Activated T-helper 1 cell treated with anti-CD3 and anti-CD28 coated beads, Interleukin-12 subunit alpha, Interleukin-12 subunit beta, Interleukin-2, Interleukin-4 antibody, amounts not matched to agents 30 ng/mL and 10 ng/mL and 1 ng/mL, durations not matched to agents 14 hours and 24 hours and 36 hours (primary cell): ENCODE measurements at regions of chr22 and their contacts with region 1.

Region 1: GRCh38 chr22:38755911-38756532 is at the start of gene SUN2:
- DNase-seq: peak; percentile 94
- H3K4me3 Mint-ChIP-seq: peak within 1 kb of the TSS; percentile 95
- H3K27ac Mint-ChIP-seq: peak within 1 kb of the TSS; percentile 97
- H3K4me1 Mint-ChIP-seq: peaks cover 59% of the 10 kb centered on the region
- H3K27me3 Mint-ChIP-seq: no peaks in the 10 kb centered on the region
- total RNA-seq, gene SUN2: 146 and 154 TPM in 2 replicates

Region 2: GRCh38 chr22:38740754-38741153 is 15.3 kb before region 1 on chr22:
- intact Hi-C with region 1: no loop called
- DNase-seq: no peak
- H3K4me3 Mint-ChIP-seq: no peak overlapping the region
- H3K27ac Mint-ChIP-seq: no peak overlapping the region
- H3K4me1 Mint-ChIP-seq: peaks cover 27% of the 10 kb centered on the region
- H3K27me3 Mint-ChIP-seq: no peaks in the 10 kb centered on the region

Region 3: GRCh38 chr22:38793721-38794466 is 37.9 kb after region 1 on chr22 and contains the start of gene DNAL4:
- intact Hi-C with region 1: loop called (anchors 1 kb)
- DNase-seq: peak; percentile 90
- H3K4me3 Mint-ChIP-seq: peak within 1 kb of the TSS; percentile 93
- H3K27ac Mint-ChIP-seq: peak within 1 kb of the TSS; percentile 80
- H3K4me1 Mint-ChIP-seq: peaks cover 22% of the 10 kb centered on the region
- H3K27me3 Mint-ChIP-seq: peaks cover 4% of the 10 kb centered on the region
- total RNA-seq, gene DNAL4: 5.0 TPM in 2 replicates

Region 4: DNA sequence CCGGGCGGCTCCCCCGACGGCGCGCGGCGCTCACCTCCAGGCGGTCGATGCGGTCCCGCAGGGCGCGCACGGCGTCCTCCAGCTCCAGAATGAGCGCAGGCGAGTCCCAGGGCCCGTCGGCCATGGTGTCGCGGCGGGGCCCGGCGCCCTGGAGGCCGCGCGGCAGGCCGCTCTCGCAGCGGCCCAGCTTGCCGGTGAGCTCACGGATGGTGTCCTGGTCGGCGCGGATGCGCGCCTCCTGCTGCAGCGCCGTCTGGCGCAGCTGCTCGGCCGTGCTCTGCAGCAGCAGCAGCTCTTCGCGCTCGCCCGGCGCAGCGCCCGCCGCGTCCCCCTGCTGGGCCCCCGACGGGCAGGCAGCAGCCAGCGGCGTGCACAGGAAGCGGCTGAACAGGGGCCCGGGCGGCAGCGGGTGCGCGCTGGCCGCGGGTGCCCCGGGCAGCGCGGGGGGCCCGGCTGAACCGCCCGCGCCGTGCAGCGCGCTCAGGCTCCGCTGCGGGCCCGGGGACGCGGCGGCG is 87.2 kb after region 1 on chr22:
- intact Hi-C with region 1: loop called (anchors 2 kb)
- DNase-seq: peak; percentile 44
- H3K4me3 Mint-ChIP-seq: no peak overlapping the region
- H3K27ac Mint-ChIP-seq: no peak overlapping the region
- H3K4me1 Mint-ChIP-seq: peaks cover 6% of the 10 kb centered on the region
- H3K27me3 Mint-ChIP-seq: peaks cover 54% of the 10 kb centered on the region

Region 5: GRCh38 chr22:38872172-38872830 is 116.3 kb after region 1 on chr22 and contains the start of gene CBX6:
- intact Hi-C with region 1: loop called (anchors 1 kb)
- DNase-seq: peak; percentile 94
- H3K4me3 Mint-ChIP-seq: peak within 1 kb of the TSS; percentile 89
- H3K27ac Mint-ChIP-seq: peak within 1 kb of the TSS; percentile 91
- H3K4me1 Mint-ChIP-seq: peaks cover 59% of the 10 kb centered on the region
- H3K27me3 Mint-ChIP-seq: peaks cover 2% of the 10 kb centered on the region
- total RNA-seq, gene CBX6: 171 and 178 TPM in 2 replicates

Region 6: DNA sequence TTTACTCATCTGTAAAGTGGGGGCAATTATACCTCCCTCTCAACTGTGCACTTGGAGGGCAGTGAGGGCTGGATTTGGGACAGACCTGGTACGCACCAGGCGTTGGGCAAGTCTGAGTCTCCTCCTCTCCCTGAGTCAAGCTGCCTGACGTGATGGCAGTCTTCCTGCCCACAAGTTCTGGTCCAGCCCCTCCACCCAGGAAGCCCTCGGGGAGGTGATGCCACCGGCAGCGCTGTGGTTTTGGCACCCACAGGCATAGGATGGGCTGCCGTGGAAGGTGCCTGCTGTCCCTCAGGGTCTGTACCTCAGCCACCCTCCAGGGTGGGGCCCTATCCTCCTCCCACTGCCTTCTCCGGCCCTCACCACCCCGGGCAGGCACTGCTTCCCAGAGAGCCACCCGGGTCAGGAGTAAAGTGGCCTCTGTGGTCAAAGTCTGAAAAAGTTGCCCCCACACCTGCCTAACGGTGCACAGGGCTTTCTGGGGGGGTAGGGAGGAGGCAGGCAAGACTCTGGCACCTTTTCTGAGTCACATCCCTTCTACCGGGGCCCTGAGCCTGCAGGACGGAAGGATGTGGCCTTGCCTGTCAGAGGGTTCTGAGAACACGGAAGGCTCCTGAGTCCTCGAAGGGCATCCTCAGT is 334.5 kb after region 1 on chr22:
- intact Hi-C with region 1: loop called (anchors 5 kb)
- DNase-seq: peak; percentile 81
- H3K4me3 Mint-ChIP-seq: peak overlapping the region; percentile 75
- H3K27ac Mint-ChIP-seq: peak overlapping the region; percentile 94
- H3K4me1 Mint-ChIP-seq: peaks cover 80% of the 10 kb centered on the region
- H3K27me3 Mint-ChIP-seq: no peaks in the 10 kb centered on the region